HEK293T (cell line): ENCODE measurements at regions of chr12 and their contacts with region 1.

Region 1: GRCh38 chr12:8078398-8078797 is 3.7 kb upstream of the NECAP1 start:
- DNase-seq: no peak

Region 2: GRCh38 chr12:8026291-8026900 is 52.0 kb before region 1 on chr12:
- CTCF ChIA-PET with region 1: no interaction called
- POLR2A ChIA-PET with region 1: interaction called, 11 read pairs
- DNase-seq: peak; percentile 95

Region 3: GRCh38 chr12:8038659-8039114 is 39.7 kb before region 1 on chr12:
- CTCF ChIA-PET with region 1: interaction called, 11 read pairs
- POLR2A ChIA-PET with region 1: interaction called, 5 read pairs
- DNase-seq: peak; percentile 53

Region 4: DNA sequence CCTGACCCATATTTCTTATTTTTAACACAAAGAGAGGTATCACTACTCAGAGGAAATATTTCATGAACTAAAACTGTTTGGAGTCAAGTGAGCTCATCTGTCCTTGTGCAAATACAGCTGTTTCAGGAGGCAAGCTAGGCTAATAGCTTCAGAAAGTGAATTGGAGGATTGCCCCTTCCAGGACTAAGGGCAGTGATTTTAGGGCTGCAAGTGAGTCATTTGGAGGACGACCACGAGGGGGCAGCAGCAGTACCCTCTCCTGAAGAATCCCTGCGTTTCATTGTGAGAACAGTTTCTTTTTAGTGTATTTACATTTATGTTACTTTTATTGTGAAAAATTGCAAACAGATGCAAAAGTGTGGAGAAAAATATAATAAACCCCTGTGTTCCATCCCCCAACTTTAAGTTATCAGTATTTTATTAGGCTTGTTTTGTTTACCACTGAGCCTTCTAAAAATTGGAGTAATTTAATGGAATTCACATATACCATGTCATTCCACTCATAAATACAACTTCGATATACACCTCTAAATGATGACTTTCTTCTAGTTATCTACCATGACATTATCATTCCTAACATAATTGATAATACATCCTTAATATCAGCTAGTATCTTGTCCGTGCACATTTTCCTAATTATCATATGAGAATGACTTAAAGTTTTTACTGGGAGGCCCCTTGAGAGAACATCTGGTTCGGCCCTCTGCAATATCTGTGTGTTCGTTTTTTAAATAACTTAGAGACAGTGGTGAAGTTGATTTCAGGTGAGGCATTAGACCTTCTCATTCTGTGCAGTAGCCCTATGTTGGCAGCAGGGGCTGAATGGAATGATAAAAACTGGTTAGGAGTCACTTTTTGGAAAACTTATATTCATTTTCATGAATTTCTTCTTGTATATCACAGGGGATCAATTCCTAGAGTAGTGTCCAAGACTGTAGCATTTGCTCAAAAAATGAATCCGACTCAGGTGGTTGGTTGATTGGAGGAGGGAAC is 32.1 kb before region 1 on chr12:
- CTCF ChIA-PET with region 1: interaction called, 13 read pairs
- POLR2A ChIA-PET with region 1: interaction called, 10 read pairs
- DNase-seq: peak; percentile 78

Region 5: DNA sequence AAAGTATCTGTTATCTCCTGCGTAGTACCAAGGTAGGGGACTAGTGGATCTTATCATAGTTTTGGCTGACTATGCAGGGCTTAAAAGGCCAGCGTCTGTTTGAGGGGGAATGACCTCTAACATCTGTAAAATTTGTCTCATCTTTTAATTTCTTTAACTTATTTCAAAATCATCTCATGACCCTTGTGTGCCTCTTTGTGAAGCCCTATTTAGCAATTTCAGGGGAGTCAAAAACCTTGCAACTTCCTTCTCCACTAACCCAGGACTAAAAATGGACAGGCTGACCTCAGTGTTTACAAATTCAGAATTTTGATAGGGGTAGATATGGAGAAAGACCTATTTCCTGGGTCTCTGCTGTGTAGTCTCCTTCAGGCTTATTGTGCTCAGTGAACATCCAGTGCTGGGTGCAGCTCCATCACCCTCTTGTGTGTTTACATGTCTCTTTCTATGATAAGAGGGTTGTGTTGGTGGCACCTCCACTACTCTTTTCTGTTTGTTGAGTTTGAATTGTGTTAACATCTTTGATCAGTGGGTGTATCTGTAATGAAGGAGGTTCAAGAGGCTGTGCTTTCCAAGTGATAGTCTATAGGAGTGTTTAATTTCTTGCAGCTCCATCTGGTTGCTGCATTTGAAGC is 18.0 kb after region 1 on chr12:
- CTCF ChIA-PET with region 1: no interaction called
- POLR2A ChIA-PET with region 1: no interaction called
- DNase-seq: no peak

Region 6: GRCh38 chr12:8108808-8109398 is 30.5 kb after region 1 on chr12:
- CTCF ChIA-PET with region 1: no interaction called
- POLR2A ChIA-PET with region 1: no interaction called
- DNase-seq: peak; percentile 66

Region 7: GRCh38 chr12:8127138-8127537 is 48.7 kb after region 1 on chr12:
- CTCF ChIA-PET with region 1: no interaction called
- POLR2A ChIA-PET with region 1: no interaction called
- DNase-seq: no peak